ENCODE measurements at regions of chr2 and their contacts with region 1.

Region 1: DNA sequence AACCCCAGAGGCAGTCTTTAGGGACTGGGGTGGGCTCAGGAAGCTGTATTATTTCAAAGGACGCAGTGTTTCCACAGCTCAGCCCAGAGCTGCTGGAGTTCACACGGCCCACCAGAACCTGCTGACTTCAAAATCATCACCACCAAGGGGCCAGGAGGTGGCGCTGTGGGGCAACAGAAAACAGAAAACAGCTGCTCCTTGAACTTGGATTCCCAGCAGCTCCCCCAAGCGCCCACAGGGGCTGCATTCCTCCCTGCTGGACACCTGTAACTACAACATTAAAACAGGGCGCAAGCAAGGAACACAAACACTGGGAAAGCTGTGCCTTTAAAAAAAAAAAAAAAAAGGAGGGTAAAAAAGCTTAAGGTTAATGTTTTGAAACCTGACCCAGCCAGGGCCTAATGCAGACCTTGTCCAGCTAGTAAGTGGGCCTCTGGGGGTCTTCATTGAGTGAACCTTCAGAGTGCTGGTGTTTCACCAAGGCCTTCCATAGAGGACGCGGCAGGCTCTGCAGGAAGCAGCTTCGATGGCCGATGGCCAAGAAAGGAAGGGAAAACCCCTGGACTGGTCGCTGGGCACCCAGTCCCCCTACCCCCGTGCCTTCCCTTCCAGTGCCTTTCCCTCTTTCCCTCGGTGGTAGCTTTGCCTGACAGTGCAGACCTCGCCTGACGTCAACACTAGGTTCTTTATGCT is 25.9 kb downstream of the MLPH start:
- DNase-seq: peak; percentile 71
- H3K4me3 ChIP-seq: no peak overlapping the region
- H3K27ac ChIP-seq: peak overlapping the region; percentile 31
- H3K27me3 ChIP-seq: no peaks in the 10 kb centered on the region
- CTCF ChIP-seq: peak; percentile 92

Region 2: DNA sequence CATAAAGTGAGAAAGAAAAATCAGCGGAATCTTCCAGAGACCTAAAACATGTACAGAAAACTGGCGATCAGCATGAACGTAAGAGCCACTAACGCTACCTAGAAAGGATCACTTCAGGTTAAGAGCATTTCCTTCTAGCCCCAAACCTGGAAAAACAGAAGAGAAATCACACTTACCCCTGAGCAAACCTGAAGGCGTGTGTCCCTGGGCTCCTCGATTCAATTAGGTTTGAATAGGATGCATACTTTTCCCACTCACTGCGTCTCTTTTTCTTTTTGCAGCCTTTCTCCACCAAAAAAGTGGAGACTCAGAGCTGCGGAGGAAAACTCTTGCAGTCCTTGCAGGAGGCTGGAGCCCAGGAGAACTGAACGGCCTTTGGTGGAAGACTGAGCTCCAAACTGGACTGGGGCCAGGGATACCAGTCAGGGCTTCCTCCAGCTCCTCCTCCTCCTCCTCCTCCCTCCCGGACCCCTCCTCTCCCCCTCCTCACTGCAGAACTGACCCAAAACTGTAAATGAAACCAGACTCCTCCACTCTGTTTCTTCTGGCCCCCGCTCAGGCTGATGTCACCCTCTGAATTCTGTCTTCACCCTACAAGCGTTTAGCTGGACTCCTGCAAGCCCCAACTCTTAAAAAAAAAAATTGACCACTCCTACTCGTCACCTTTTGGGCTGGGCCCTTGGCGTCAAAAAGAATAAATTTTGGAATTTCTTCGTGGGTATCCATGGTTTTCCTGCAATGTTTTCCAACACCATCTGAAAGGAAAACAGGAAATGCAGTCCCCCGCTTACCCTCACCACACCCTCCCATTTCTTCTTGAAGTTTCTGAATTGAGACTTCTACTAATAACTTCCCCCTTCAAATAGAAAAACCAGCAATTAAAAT is 98.9 kb before region 1 on chr2 and contains the start of gene COL6A3:
- CTCF ChIA-PET with region 1: interaction called, 12 read pairs
- POLR2A ChIA-PET with region 1: no interaction called
- DNase-seq: peak; percentile 96
- H3K4me3 ChIP-seq: peak within 1 kb of the TSS; percentile 100
- H3K27ac ChIP-seq: peak within 1 kb of the TSS; percentile 94
- H3K27me3 ChIP-seq: no peaks in the 10 kb centered on the region
- CTCF ChIP-seq: no peak
- polyA plus RNA-seq, gene COL6A3: 1,384 and 2,107 TPM in 2 replicates

Region 3: GRCh38 chr2:237474931-237475703 is 37.8 kb before region 1 on chr2:
- CTCF ChIA-PET with region 1: interaction called, 32 read pairs
- POLR2A ChIA-PET with region 1: interaction called, 4 read pairs
- DNase-seq: peak; percentile 51
- H3K4me3 ChIP-seq: peak overlapping the region; percentile 64
- H3K27ac ChIP-seq: peak overlapping the region; percentile 90
- H3K27me3 ChIP-seq: no peaks in the 10 kb centered on the region
- CTCF ChIP-seq: peak; percentile 74

Region 4: GRCh38 chr2:237494085-237494484 is 18.8 kb before region 1 on chr2:
- CTCF ChIA-PET with region 1: interaction called, 67 read pairs
- POLR2A ChIA-PET with region 1: no interaction called
- DNase-seq: no peak
- H3K4me3 ChIP-seq: no peak overlapping the region
- H3K27ac ChIP-seq: no peak overlapping the region
- H3K27me3 ChIP-seq: no peaks in the 10 kb centered on the region
- CTCF ChIP-seq: no peak

Region 5: GRCh38 chr2:237524631-237525030 is 11.7 kb after region 1 on chr2:
- CTCF ChIA-PET with region 1: interaction called, 18 read pairs
- POLR2A ChIA-PET with region 1: no interaction called
- DNase-seq: no peak
- H3K4me3 ChIP-seq: no peak overlapping the region
- H3K27ac ChIP-seq: no peak overlapping the region
- H3K27me3 ChIP-seq: no peaks in the 10 kb centered on the region
- CTCF ChIP-seq: no peak

Region 6: DNA sequence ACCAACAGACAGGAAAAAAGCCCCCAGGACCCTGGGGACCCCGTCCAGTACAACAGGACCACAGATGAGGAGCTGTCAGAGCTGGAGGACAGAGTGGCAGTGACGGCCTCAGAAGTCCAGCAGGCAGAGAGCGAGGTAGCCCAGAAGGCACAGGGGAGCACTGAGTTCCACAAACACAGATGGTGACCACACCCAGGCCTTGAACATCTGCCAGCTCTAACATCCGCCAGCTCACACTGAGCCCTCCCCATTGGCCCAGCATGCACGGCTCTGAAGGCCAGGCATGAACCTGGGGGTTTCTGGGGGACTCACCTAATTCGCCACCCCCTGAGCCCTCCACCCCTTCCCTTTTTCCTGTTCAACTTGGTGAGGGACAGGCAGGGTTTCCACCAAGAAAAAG is 27.9 kb after region 1 on chr2:
- CTCF ChIA-PET with region 1: interaction called, 20 read pairs
- POLR2A ChIA-PET with region 1: interaction called, 3 read pairs
- DNase-seq: peak; percentile 18
- H3K4me3 ChIP-seq: no peak overlapping the region
- H3K27ac ChIP-seq: no peak overlapping the region
- H3K27me3 ChIP-seq: no peaks in the 10 kb centered on the region
- CTCF ChIP-seq: no peak

Region 7: DNA sequence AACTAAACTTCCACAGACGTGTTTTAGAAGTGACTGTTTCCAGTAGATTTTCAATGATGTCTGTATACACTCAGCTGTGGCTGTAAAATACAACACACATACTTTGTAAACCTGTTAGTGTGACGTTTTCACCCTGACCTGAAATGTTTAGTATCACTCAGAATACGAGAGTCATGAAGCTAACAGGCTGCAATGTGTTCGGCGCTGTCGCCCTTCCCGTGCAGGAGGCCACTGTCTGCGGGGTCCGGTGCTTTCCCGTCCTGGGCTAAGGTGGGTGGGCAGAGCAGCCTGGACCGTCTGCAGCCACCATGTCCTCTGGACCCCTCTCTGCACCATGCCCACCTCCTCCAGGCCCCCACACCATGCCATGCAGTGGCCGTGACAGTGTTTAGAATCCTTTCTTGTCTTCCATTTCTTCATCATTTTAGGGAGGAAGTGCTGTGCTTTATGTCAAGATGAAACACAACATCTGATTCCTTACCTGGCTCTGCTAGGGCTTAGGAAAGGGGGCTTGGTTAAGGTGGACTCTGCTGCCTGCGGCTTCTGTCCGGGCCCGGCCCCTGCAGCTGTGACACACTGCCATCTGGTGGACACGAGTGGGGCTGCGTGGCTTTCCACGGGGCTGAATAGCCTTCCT is 231.8 kb after region 1 on chr2:
- CTCF ChIA-PET with region 1: interaction called, 49 read pairs
- POLR2A ChIA-PET with region 1: no interaction called
- DNase-seq: no peak
- H3K4me3 ChIP-seq: no peak overlapping the region
- H3K27ac ChIP-seq: peak overlapping the region; percentile 12
- H3K27me3 ChIP-seq: no peaks in the 10 kb centered on the region
- CTCF ChIP-seq: peak; percentile 99

Measured in AG04450 (cell line).